ENCODE measurements at regions of chr1 and their contacts with region 1.

Region 1: DNA sequence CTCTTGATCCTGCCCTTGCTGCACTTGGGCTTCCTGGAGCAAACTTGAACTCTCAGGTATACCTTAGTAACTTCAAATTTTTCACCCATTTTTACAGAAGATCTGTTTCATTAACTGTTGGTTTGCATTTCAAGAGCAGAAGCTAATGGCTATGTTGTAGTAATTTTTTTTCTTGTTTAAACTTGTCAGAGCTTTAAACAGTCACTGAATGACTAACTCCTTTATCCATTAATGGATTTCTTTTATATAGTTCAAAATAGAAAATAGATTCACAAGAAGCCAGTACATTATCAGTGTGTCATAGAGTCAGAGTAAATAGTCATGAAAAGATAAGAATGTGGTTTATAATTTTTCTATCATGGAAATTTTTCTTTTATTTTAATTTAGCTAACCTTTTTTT is 13.6 kb downstream of the SRSF11 start:
- DNase-seq: no peak
- ATAC-seq: no peak
- H3K4me3 ChIP-seq: no peak overlapping the region
- H3K27ac ChIP-seq: no peak overlapping the region
- H3K4me1 ChIP-seq: no peaks in the 10 kb centered on the region
- H3K27me3 ChIP-seq: no peaks in the 10 kb centered on the region
- CTCF ChIP-seq: no peak

Region 2: GRCh38 chr1:70290218-70290617 is 55.5 kb after region 1 on chr1:
- intact Hi-C with region 1: no loop called
- DNase-seq: no peak
- ATAC-seq: no peak
- H3K4me3 ChIP-seq: no peak overlapping the region
- H3K27ac ChIP-seq: no peak overlapping the region
- H3K4me1 ChIP-seq: no peaks in the 10 kb centered on the region
- H3K27me3 ChIP-seq: no peaks in the 10 kb centered on the region
- CTCF ChIP-seq: no peak

Region 3: DNA sequence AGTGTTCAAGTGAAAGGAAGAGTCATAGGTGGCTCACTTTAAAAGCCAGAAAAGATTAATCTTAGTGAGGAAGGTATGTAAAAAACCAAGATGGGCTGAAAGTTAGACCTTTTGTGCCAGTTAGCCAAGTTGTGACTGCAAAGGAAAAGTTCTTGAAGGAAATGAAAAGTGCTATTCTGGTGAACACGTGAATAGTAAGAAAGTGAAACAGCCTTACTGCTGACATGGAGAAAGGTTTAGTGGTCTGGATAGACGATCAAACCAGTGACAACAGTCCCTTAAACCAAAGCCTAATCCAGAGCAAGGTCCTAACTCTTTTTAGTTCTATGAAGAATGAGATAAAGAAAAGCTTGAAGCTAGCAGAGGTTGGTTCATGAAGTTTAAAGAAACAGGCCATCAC is 282.7 kb after region 1 on chr1:
- intact Hi-C with region 1: no loop called
- DNase-seq: no peak
- ATAC-seq: no peak
- H3K4me3 ChIP-seq: no peak overlapping the region
- H3K27ac ChIP-seq: no peak overlapping the region
- H3K4me1 ChIP-seq: no peaks in the 10 kb centered on the region
- H3K27me3 ChIP-seq: no peaks in the 10 kb centered on the region
- CTCF ChIP-seq: no peak

Region 4: GRCh38 chr1:71074681-71075080 is 839.9 kb after region 1 on chr1:
- intact Hi-C with region 1: loop called (anchors 10 kb)
- DNase-seq: no peak
- ATAC-seq: no peak
- H3K4me3 ChIP-seq: no peak overlapping the region
- H3K27ac ChIP-seq: no peak overlapping the region
- H3K4me1 ChIP-seq: peaks cover 16% of the 10 kb centered on the region
- H3K27me3 ChIP-seq: no peaks in the 10 kb centered on the region
- CTCF ChIP-seq: no peak

Measured in upper lobe of right lung (tissue), 1 donor.